ENCODE measurements at regions of chr17 and their contacts with region 1.

Region 1: DNA sequence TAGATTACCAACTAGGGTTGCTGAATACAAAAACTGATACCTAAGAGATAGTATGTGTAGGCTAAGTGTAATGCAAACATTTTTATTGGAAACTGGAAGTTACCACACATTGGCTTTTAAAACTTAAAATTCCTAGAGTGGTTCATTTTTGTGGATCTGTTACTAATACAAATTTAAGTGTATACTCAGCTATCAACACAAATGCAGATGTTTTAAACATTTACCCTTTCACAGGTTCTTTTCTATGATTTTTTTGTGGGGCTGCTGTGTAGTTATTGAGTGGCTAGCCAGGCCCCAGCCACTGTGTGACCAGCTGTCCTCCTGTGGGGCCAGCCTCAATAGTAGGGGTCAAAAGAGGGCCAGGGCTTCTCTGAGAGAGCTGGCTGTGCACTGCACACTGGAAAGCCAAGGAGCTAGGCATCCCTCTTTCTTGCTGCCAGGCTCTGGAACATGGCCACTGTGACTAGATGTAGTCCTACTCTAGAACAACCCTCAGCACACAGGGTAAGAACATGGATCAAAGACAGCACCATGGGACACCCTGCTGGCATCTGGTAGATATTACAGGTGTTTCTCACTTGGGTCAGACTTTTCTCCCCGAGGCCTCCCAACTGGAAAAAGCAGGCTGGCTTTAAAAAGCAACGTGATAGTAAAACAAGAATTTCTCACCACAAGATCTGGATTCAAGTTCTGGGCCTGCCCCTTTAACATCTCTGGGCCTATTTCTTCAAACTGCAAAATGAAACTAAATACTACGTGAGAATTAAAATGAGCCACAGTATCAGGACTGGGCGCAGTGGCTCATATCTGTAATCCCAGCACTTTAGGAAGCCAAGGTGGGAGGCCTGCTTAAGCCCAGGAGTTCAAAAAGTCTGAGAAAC is 7.3 kb upstream of the VEZF1 start:
- DNase-seq: no peak

Region 2: GRCh38 chr17:57875309-57876115 is 119.8 kb before region 1 on chr17:
- intact Hi-C with region 1: loop called in 1 of 2 experiments (anchors 5 kb)
- DNase-seq: peak; percentile 94

Region 3: DNA sequence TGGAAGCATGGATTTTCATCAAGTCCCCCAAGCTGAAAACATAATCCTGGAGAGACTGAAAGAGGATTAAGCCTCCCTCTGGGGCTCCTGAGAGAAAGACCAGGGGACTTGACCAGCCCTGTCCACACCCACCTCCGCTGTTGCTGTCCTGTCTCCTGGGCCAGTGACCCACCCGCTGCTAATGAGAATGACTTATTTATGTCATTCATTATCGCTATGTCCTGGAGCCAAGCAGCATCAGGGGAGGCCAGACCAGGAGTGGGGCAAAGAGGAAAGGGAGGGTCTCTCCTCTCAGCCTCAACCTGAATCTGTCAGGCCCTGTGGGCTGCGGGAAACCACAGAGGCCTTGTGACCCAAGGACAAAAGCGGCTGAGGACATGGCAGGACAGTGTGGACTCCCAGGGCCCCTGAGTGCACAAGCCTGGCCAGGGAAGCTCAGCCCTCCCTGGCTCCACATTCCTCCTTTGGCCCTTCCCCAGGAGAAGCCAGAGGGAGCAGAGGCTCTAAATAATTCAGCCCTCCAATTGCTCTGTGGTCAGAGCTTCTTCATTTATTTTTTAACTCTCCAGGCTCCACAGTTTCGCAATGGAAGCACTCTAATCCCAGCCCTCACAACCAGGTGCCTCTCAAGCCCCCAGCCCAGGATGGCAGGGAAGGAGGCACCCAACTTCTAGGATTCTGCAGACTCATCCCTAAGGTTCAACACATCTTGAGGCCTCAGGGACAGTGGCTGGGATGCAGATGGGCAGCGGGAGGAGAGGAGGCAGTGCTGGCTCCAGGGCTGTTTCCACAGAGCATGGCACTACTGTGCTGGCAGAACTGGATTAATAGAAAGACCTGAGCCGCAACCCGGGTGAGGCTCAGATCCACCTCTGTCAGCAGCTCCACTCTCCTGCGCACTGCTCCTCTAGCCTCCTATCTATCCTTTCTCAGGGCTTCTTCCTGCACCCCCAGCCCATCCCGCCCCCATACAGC is 59.2 kb before region 1 on chr17:
- intact Hi-C with region 1: no loop called
- DNase-seq: peak; percentile 88

Measured in posterior vena cava (tissue), 2 donors.